CD8-positive, alpha-beta T cell (primary cell): ENCODE measurements at regions of chr6 and their contacts with region 1.

Region 1: GRCh38 chr6:139291813-139292619 is at the start of gene TXLNB:
- DNase-seq: peak; percentile 55 to 92 (median 80)
- ATAC-seq: peak; percentile 85
- H3K4me3 ChIP-seq: peak within 1 kb of the TSS; percentile 16 to 34
- H3K4me3 Mint-ChIP-seq: peak within 1 kb of the TSS; percentile 77
- H3K27ac ChIP-seq: peak within 1 kb of the TSS; percentile 77 to 82
- H3K27ac Mint-ChIP-seq: peak within 1 kb of the TSS; percentile 96
- H3K4me1 ChIP-seq: peaks cover 39% of the 10 kb centered on the region
- H3K4me1 Mint-ChIP-seq: peaks cover 66% of the 10 kb centered on the region
- H3K27me3 ChIP-seq: no peaks in the 10 kb centered on the region
- H3K27me3 Mint-ChIP-seq: no peaks in the 10 kb centered on the region
- CTCF ChIP-seq: no peak
- total RNA-seq, gene TXLNB: 0.22 to 0.72 TPM

Region 2: DNA sequence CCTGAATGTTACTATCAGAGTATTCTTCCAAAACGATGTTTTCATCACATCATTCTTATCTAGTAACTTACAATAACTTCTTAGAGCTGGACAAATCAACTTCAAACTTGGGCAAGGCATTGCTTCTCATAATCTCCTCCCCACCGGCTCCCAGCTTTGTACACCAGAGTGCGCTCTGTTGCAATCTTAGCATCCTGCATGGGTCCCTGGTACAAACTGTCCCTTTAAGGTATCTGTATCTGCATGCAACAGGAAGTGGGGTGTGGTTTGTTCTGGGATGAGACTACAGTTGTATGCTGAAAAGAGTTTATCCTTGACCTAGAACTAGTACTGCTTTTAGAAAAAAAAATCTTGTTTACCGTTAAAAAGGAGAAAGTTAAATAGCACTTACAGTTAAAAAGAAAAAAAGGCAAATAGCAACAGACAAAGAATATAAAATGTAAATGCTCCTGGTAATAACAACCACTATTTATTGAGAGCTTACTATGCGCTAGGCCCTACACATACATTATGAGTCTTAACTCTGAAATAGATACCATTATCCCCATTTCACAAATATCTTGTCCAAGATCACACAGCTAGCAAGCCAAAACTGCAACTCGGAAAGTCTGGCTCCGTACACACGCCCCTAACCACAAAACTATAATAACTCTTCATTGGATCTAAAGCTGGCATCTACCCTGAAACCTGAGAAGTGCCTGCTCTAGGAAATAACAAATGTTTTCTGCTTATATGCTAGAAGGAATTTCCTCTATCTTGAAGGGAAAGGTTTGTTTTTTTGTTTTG is 166.9 kb before region 1 on chr6:
- CTCF ChIA-PET with region 1: interaction called, 3 read pairs
- POLR2A ChIA-PET with region 1: interaction called, 7 read pairs
- intact Hi-C with region 1: loop called (anchors 1 to 5 kb)
- DNase-seq: peak; percentile 55 to 93 (median 82)
- ATAC-seq: peak; percentile 95
- H3K4me3 ChIP-seq: peak overlapping the region; percentile 9 to 24
- H3K4me3 Mint-ChIP-seq: peak overlapping the region; percentile 59
- H3K27ac ChIP-seq: peak overlapping the region; percentile 42 to 71
- H3K27ac Mint-ChIP-seq: peak overlapping the region; percentile 93
- H3K4me1 ChIP-seq: peaks cover 30% of the 10 kb centered on the region
- H3K4me1 Mint-ChIP-seq: peaks cover 58% of the 10 kb centered on the region
- H3K27me3 ChIP-seq: no peaks in the 10 kb centered on the region
- H3K27me3 Mint-ChIP-seq: no peaks in the 10 kb centered on the region
- CTCF ChIP-seq: peak; percentile 86

Region 3: DNA sequence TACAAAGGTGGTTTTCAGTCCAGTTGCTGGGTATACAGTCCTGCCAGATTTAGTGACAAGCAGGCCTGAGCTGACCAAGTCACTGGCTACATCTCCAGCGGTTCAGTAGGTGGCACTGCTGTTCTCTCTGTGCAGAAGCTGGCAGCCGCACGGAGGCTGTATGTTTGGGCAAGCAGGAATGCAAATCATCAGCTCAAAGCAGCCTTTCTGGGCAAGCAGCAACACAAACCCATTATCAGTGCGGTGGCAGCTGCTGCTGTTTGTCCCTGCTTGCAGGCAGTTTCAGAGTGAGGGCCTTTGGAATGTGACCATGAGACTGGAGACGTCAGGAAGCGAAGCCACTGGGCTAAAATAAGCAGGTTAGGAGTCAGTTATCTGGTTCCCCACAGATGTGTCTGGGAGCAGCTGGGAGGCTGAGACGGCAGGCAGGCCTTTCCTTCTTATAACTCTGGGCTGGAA is 72.7 kb before region 1 on chr6:
- CTCF ChIA-PET with region 1: interaction called, 28 read pairs
- POLR2A ChIA-PET with region 1: interaction called, 9 read pairs
- intact Hi-C with region 1: loop called in 1 of 2 experiments (anchors 1 kb)
- DNase-seq: peak; percentile 40 to 84 (median 73)
- ATAC-seq: peak; percentile 96
- H3K4me3 ChIP-seq: no peak overlapping the region
- H3K4me3 Mint-ChIP-seq: no peak overlapping the region
- H3K27ac ChIP-seq: no peak overlapping the region
- H3K27ac Mint-ChIP-seq: peak overlapping the region; percentile 82
- H3K4me1 ChIP-seq: peaks cover 11% of the 10 kb centered on the region
- H3K4me1 Mint-ChIP-seq: peaks cover 13% of the 10 kb centered on the region
- H3K27me3 ChIP-seq: no peaks in the 10 kb centered on the region
- H3K27me3 Mint-ChIP-seq: no peaks in the 10 kb centered on the region
- CTCF ChIP-seq: peak; percentile 66

Region 4: GRCh38 chr6:139250296-139251044 is 41.5 kb before region 1 on chr6:
- CTCF ChIA-PET with region 1: interaction called, 3 read pairs
- POLR2A ChIA-PET with region 1: interaction called, 4 read pairs
- intact Hi-C with region 1: loop called in 1 of 2 experiments (anchors 1 kb)
- DNase-seq: peak; percentile 22 to 79 (median 57)
- ATAC-seq: peak; percentile 96
- H3K4me3 ChIP-seq: no peak overlapping the region
- H3K4me3 Mint-ChIP-seq: no peak overlapping the region
- H3K27ac ChIP-seq: peak overlapping the region in 1 of 2 experiments; percentile 44
- H3K27ac Mint-ChIP-seq: no peak overlapping the region
- H3K4me1 ChIP-seq: peaks cover 3% of the 10 kb centered on the region
- H3K4me1 Mint-ChIP-seq: peaks cover 30% of the 10 kb centered on the region
- H3K27me3 ChIP-seq: no peaks in the 10 kb centered on the region
- H3K27me3 Mint-ChIP-seq: no peaks in the 10 kb centered on the region
- CTCF ChIP-seq: peak; percentile 53

Region 5: GRCh38 chr6:139278190-139278589 is 13.8 kb before region 1 on chr6:
- CTCF ChIA-PET with region 1: interaction called, 7 read pairs
- POLR2A ChIA-PET with region 1: interaction called, 6 read pairs
- intact Hi-C with region 1: loop called in 1 of 2 experiments (anchors 1 kb)
- DNase-seq: no peak
- ATAC-seq: no peak
- H3K4me3 ChIP-seq: no peak overlapping the region
- H3K4me3 Mint-ChIP-seq: no peak overlapping the region
- H3K27ac ChIP-seq: no peak overlapping the region
- H3K27ac Mint-ChIP-seq: peak overlapping the region; percentile 80
- H3K4me1 ChIP-seq: peaks cover 16% of the 10 kb centered on the region
- H3K4me1 Mint-ChIP-seq: peaks cover 39% of the 10 kb centered on the region
- H3K27me3 ChIP-seq: no peaks in the 10 kb centered on the region
- H3K27me3 Mint-ChIP-seq: no peaks in the 10 kb centered on the region
- CTCF ChIP-seq: no peak

Region 6: DNA sequence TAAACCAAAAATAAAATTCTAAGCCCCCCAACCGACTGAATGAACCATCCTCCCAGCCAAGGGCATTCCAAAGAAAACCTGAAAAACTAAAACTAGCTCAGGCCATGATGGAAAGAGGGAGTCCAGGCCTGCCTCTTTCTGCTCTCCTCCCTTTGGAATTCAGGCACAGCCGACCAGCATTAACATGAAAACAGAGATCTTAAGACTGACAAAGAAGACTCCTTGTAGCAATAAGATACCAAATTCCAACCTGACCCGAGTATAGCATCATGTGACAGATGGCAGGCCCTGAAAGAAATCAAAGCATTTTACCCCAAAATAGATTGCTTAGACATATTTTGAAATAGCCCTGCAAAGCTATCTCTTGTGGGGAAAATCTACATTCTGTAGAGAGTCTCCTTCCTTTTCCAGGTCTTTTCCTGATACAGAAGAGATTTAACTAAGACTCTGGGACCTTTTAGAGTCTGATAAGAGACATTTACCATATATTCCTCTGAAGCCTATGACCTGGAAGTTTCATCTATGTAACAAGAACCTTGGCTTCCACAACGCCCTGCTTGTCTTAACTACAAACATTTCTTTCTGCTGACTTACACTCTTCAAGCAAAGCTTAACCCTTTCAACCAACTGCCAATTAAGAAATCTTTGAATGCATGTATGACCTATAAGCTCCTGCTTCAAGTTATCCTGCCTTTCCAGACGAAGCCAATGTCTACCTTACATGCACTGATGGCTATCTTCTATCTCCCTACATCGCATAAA is 21.9 kb after region 1 on chr6:
- CTCF ChIA-PET with region 1: interaction called, 3 read pairs
- POLR2A ChIA-PET with region 1: interaction called, 4 read pairs
- intact Hi-C with region 1: loop called in 1 of 2 experiments (anchors 2 kb)
- DNase-seq: no peak
- ATAC-seq: no peak
- H3K4me3 ChIP-seq: no peak overlapping the region
- H3K4me3 Mint-ChIP-seq: no peak overlapping the region
- H3K27ac ChIP-seq: no peak overlapping the region
- H3K27ac Mint-ChIP-seq: no peak overlapping the region
- H3K4me1 ChIP-seq: no peaks in the 10 kb centered on the region
- H3K4me1 Mint-ChIP-seq: peaks cover 10% of the 10 kb centered on the region
- H3K27me3 ChIP-seq: no peaks in the 10 kb centered on the region
- H3K27me3 Mint-ChIP-seq: no peaks in the 10 kb centered on the region
- CTCF ChIP-seq: no peak

Region 7: GRCh38 chr6:139334806-139335446 is 42.9 kb after region 1 on chr6:
- CTCF ChIA-PET with region 1: no interaction called
- POLR2A ChIA-PET with region 1: interaction called, 11 read pairs
- intact Hi-C with region 1: no loop called
- DNase-seq: peak in 1 of 9 experiments; percentile 17
- ATAC-seq: no peak
- H3K4me3 ChIP-seq: no peak overlapping the region
- H3K4me3 Mint-ChIP-seq: no peak overlapping the region
- H3K27ac ChIP-seq: no peak overlapping the region
- H3K27ac Mint-ChIP-seq: no peak overlapping the region
- H3K4me1 ChIP-seq: no peaks in the 10 kb centered on the region
- H3K4me1 Mint-ChIP-seq: peaks cover 4% of the 10 kb centered on the region
- H3K27me3 ChIP-seq: no peaks in the 10 kb centered on the region
- H3K27me3 Mint-ChIP-seq: no peaks in the 10 kb centered on the region
- CTCF ChIP-seq: no peak